ENCODE measurements at regions of chr10 and their contacts with region 1.

Region 1: GRCh38 chr10:77641788-77642397 is 4.3 kb upstream of the KCNMA1 start:
- H3K4me3 ChIP-seq: no peak overlapping the region
- H3K27ac ChIP-seq: no peak overlapping the region
- H3K4me1 ChIP-seq: no peaks in the 10 kb centered on the region
- CTCF ChIP-seq: peak; percentile 31; the same call in 1 of the 2 replicates

Region 2: DNA sequence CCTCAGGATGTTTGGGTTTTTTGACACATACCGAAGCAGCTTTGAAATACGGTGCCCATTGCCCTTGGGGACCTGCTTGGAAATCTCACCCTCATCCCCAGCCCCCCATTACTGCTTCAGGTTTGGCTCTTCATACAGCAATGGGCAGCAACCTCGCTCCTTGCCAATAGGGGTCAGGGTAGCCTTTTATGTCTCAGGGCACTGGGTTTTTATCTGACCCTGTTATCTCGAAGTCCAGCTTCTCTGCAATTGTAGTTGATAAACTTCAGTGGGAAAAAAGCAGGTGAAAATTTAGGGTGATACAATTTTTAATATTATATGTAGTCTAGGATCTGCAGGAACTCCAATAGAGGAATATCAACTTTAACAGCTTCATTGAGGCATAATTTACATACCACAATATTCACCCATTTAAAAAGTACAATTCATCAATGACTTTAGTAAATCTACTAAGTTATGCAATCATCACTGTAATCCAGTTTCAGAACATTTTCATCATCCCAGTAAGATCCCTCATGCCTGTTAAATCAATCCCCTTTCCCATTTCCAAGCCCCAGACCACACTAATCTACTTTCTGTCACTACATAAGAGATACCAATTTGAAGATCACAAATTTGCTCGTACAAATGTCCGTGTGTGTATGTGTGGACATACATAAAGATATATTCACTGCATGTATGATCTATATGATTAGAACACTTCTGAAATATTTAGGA is 390.4 kb before region 1 on chr10:
- CTCF ChIA-PET with region 1: interaction called, 18 read pairs
- POLR2A ChIA-PET with region 1: no interaction called
- H3K4me3 ChIP-seq: no peak overlapping the region
- H3K27ac ChIP-seq: no peak overlapping the region
- H3K4me1 ChIP-seq: peaks cover 12% of the 10 kb centered on the region
- CTCF ChIP-seq: peak; percentile 73

Region 3: GRCh38 chr10:77391605-77392235 is 250.2 kb before region 1 on chr10:
- CTCF ChIA-PET with region 1: interaction called, 16 read pairs
- POLR2A ChIA-PET with region 1: no interaction called
- H3K4me3 ChIP-seq: no peak overlapping the region
- H3K27ac ChIP-seq: no peak overlapping the region
- H3K4me1 ChIP-seq: peaks cover under 1% of the 10 kb centered on the region
- CTCF ChIP-seq: peak; percentile 59; the same call in 1 of the 2 replicates

Region 4: GRCh38 chr10:77664008-77664407 is 22.1 kb after region 1 on chr10:
- CTCF ChIA-PET with region 1: interaction called, 11 read pairs
- POLR2A ChIA-PET with region 1: no interaction called
- H3K4me3 ChIP-seq: no peak overlapping the region
- H3K27ac ChIP-seq: no peak overlapping the region
- H3K4me1 ChIP-seq: no peaks in the 10 kb centered on the region
- CTCF ChIP-seq: no peak

Region 5: GRCh38 chr10:78033637-78034470 is 392.0 kb after region 1 on chr10 and contains the start of gene RPS24:
- CTCF ChIA-PET with region 1: no interaction called
- POLR2A ChIA-PET with region 1: no interaction called
- H3K4me3 ChIP-seq: peak within 1 kb of the TSS; percentile 75
- H3K27ac ChIP-seq: peak within 1 kb of the TSS; percentile 98
- H3K4me1 ChIP-seq: peaks cover 10% of the 10 kb centered on the region; the same call in 1 of the 2 replicates
- CTCF ChIP-seq: no peak